ENCODE measurements at regions of chr6 and their contacts with region 1.

Region 1: GRCh38 chr6:97805596-97805995 is 522.6 kb upstream of the MMS22L start:
- DNase-seq: no peak
- H3K4me3 ChIP-seq: no peak overlapping the region
- H3K27ac ChIP-seq: no peak overlapping the region
- H3K4me1 ChIP-seq: no peaks in the 10 kb centered on the region
- H3K27me3 ChIP-seq: no peaks in the 10 kb centered on the region
- CTCF ChIP-seq: no peak

Region 2: DNA sequence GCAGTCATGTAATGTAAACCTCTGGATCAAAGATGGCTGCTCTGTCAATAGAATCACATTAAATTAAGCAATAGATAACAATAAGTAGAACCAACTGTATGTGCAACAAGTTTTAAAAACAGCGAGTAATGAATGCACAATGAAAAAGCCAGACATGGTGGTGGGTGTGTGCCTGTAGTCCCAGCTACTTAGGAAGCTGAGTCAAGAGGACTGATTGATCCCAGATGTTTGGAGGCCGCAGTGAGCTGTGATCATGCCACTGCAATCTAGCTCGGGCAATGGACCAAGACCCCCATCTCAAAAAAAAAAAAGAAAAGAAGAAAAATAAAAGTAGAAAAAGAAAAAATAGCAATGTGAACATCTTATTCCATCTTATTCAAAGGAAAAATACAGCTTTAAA is 36.2 kb after region 1 on chr6:
- intact Hi-C with region 1: loop called (anchors 2 kb)
- DNase-seq: no peak
- H3K4me3 ChIP-seq: no peak overlapping the region
- H3K27ac ChIP-seq: no peak overlapping the region
- H3K4me1 ChIP-seq: no peaks in the 10 kb centered on the region
- H3K27me3 ChIP-seq: no peaks in the 10 kb centered on the region
- CTCF ChIP-seq: no peak

Measured in tibial artery (tissue), 4 donors.